ENCODE measurements at regions of chr16 and their contacts with region 1.

Region 1: GRCh38 chr16:58000706-58001676 is at the start of gene USB1:
- DNase-seq: peak; percentile 73
- ATAC-seq: peak; percentile 90
- H3K4me3 ChIP-seq: peak within 1 kb of the TSS; percentile 70
- H3K27ac ChIP-seq: peak within 1 kb of the TSS; percentile 49
- H3K4me1 ChIP-seq: peaks cover 12% of the 10 kb centered on the region
- H3K27me3 ChIP-seq: no peaks in the 10 kb centered on the region
- CTCF ChIP-seq: peak; percentile 75
- POLR2A ChIP-seq: peak; percentile 57
- RAD21 ChIP-seq: peak; percentile 64
- total RNA-seq, gene USB1: 23.1 and 45.9 TPM in 2 replicates

Region 2: DNA sequence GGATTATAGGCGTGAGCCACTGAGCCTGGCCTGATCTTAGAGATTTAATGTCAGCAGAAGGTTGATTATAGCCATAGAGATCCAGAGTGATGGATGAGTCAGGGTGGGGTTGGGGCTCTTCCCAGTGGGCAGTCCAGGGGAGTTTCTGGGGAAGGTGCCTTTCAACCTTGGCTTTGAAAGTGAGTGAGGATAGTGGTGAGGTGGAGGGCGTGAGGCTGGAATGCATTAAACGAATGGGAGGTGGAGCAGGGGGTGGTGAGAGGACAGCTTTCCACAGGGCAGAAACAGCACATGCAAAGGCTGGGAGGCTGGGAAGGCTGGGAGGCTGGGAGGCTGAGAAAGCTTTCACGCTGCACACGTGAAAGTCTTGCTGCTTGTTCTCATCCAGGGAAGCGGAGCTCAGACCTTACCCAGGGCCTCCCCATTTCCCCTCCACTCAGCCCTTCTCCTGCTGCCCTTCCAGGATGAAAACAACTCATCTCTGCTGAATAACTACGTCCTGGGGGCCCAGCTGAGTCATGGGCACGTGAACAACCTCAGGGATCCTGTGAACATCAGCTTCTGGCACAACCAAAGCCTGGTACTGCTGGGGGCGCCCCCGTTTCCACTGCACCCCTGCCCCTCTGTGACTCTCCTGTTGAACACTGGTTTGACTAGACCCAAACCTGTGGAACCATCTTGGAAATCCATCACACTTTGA is 436.3 kb before region 1 on chr16:
- CTCF ChIA-PET with region 1: no interaction called
- POLR2A ChIA-PET with region 1: no interaction called
- dilution Hi-C with region 1: no loop called
- in situ Hi-C with region 1: loop called (anchors 10 kb)
- intact Hi-C with region 1: no loop called
- DNase-seq: peak; percentile 62
- ATAC-seq: peak; percentile 61
- H3K4me3 ChIP-seq: no peak overlapping the region
- H3K27ac ChIP-seq: no peak overlapping the region
- H3K4me1 ChIP-seq: peaks cover 3% of the 10 kb centered on the region; the same call in 1 of the 2 replicates
- H3K27me3 ChIP-seq: peaks cover 23% of the 10 kb centered on the region
- CTCF ChIP-seq: no peak
- POLR2A ChIP-seq: no peak
- RAD21 ChIP-seq: no peak

Region 3: GRCh38 chr16:57591086-57591869 is 409.7 kb before region 1 on chr16:
- CTCF ChIA-PET with region 1: no interaction called
- POLR2A ChIA-PET with region 1: no interaction called
- dilution Hi-C with region 1: no loop called
- in situ Hi-C with region 1: no loop called
- intact Hi-C with region 1: loop called (anchors 5 kb)
- DNase-seq: peak; percentile 82
- ATAC-seq: peak; percentile 93
- H3K4me3 ChIP-seq: no peak overlapping the region
- H3K27ac ChIP-seq: peak overlapping the region; percentile 2; the same call in 1 of the 2 replicates
- H3K4me1 ChIP-seq: peaks cover 8% of the 10 kb centered on the region
- H3K27me3 ChIP-seq: 0 out of 2 replicates have a peak, but pooled peaks cover 3% of the 10 kb centered on the region
- CTCF ChIP-seq: peak; percentile 93
- POLR2A ChIP-seq: no peak
- RAD21 ChIP-seq: peak; percentile 83

Region 4: GRCh38 chr16:57757326-57757786 is 243.6 kb before region 1 on chr16:
- CTCF ChIA-PET with region 1: no interaction called
- POLR2A ChIA-PET with region 1: no interaction called
- dilution Hi-C with region 1: no loop called
- in situ Hi-C with region 1: loop called (anchors 10 kb)
- intact Hi-C with region 1: loop called (anchors 1 kb)
- DNase-seq: peak; percentile 69
- ATAC-seq: peak; percentile 99
- H3K4me3 ChIP-seq: no peak overlapping the region
- H3K27ac ChIP-seq: no peak overlapping the region
- H3K4me1 ChIP-seq: 0 out of 2 replicates have a peak, but pooled peaks cover 2% of the 10 kb centered on the region
- H3K27me3 ChIP-seq: no peaks in the 10 kb centered on the region
- CTCF ChIP-seq: peak; percentile 97
- POLR2A ChIP-seq: no peak; the same call in 1 of the 2 replicates
- RAD21 ChIP-seq: peak; percentile 95

Region 5: GRCh38 chr16:57899771-57900661 is 101.0 kb before region 1 on chr16:
- CTCF ChIA-PET with region 1: interaction called, 3 read pairs
- POLR2A ChIA-PET with region 1: no interaction called
- dilution Hi-C with region 1: no loop called
- in situ Hi-C with region 1: loop called (anchors 5 kb)
- intact Hi-C with region 1: loop called (anchors 1 kb)
- DNase-seq: peak; percentile 62
- ATAC-seq: peak; percentile 93
- H3K4me3 ChIP-seq: no peak overlapping the region
- H3K27ac ChIP-seq: no peak overlapping the region
- H3K4me1 ChIP-seq: no peaks in the 10 kb centered on the region
- H3K27me3 ChIP-seq: peaks cover 26% of the 10 kb centered on the region
- CTCF ChIP-seq: peak; percentile 86
- POLR2A ChIP-seq: no peak
- RAD21 ChIP-seq: peak; percentile 89